ENCODE measurements at regions of chr3 and their contacts with region 1.

Region 1: GRCh38 chr3:139561959-139562676 is 22.6 kb upstream of the RBP1 start:
- DNase-seq: peak; percentile 56
- ATAC-seq: peak; percentile 73
- H3K4me3 ChIP-seq: no peak overlapping the region
- H3K27ac ChIP-seq: no peak overlapping the region
- H3K4me1 ChIP-seq: peaks cover 22% of the 10 kb centered on the region
- H3K27me3 ChIP-seq: no peaks in the 10 kb centered on the region
- CTCF ChIP-seq: peak; percentile 76

Region 2: GRCh38 chr3:139427283-139427993 is 134.7 kb before region 1 on chr3:
- CTCF ChIA-PET with region 1: no interaction called
- POLR2A ChIA-PET with region 1: no interaction called
- intact Hi-C with region 1: loop called (anchors 1 kb)
- DNase-seq: peak; percentile 80
- ATAC-seq: peak; percentile 62
- H3K4me3 ChIP-seq: no peak overlapping the region
- H3K27ac ChIP-seq: no peak overlapping the region
- H3K4me1 ChIP-seq: no peaks in the 10 kb centered on the region
- H3K27me3 ChIP-seq: no peaks in the 10 kb centered on the region
- CTCF ChIP-seq: peak; percentile 82

Region 3: GRCh38 chr3:139519998-139520737 is 42.0 kb before region 1 on chr3:
- CTCF ChIA-PET with region 1: no interaction called
- POLR2A ChIA-PET with region 1: no interaction called
- intact Hi-C with region 1: loop called (anchors 1 kb)
- DNase-seq: peak; percentile 49
- ATAC-seq: peak; percentile 35
- H3K4me3 ChIP-seq: no peak overlapping the region
- H3K27ac ChIP-seq: no peak overlapping the region
- H3K4me1 ChIP-seq: no peaks in the 10 kb centered on the region
- H3K27me3 ChIP-seq: no peaks in the 10 kb centered on the region
- CTCF ChIP-seq: peak; percentile 56

Region 4: DNA sequence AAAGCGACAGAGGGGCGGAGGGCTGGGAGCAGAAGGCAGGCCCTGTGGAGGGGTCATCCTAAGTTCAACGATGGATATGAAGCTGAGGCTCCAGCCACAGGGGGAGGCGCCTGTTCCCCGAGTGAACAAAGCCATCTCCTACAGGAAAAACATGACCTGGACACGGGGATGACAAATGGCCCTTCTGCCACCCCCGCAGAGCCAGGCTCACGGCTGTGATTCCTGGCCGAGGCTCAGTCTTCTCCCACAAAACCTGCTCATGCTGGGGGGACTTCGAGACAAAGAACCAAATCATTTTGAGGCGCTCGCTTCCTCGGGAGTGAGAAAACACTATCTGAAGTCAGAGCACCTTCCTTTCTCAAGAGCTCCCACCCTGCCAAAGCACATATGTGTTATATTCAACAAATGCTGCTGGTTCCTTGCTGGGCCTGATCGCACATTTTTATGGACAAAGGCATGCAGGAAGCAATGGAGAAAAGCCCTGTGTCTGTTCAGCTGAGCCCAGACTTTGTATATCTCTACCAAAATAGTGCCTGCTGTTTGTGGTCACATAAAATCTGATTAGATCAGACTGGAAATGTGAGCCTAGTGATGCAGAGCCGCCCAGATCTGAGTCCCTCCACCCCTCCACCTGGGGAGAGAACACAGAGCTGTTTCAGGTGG is 28.2 kb before region 1 on chr3:
- CTCF ChIA-PET with region 1: no interaction called
- POLR2A ChIA-PET with region 1: no interaction called
- intact Hi-C with region 1: loop called (anchors 2 kb)
- DNase-seq: peak; percentile 74
- ATAC-seq: peak; percentile 66
- H3K4me3 ChIP-seq: no peak overlapping the region; the same call in 1 of the 2 replicates
- H3K27ac ChIP-seq: peak overlapping the region; percentile 81
- H3K4me1 ChIP-seq: peaks cover 28% of the 10 kb centered on the region
- H3K27me3 ChIP-seq: no peaks in the 10 kb centered on the region
- CTCF ChIP-seq: no peak

Region 5: GRCh38 chr3:139546753-139547152 is 15.4 kb before region 1 on chr3:
- CTCF ChIA-PET with region 1: no interaction called
- POLR2A ChIA-PET with region 1: no interaction called
- intact Hi-C with region 1: no loop called
- DNase-seq: no peak
- ATAC-seq: no peak
- H3K4me3 ChIP-seq: no peak overlapping the region
- H3K27ac ChIP-seq: no peak overlapping the region
- H3K4me1 ChIP-seq: no peaks in the 10 kb centered on the region
- H3K27me3 ChIP-seq: no peaks in the 10 kb centered on the region
- CTCF ChIP-seq: no peak

Region 6: GRCh38 chr3:140863580-140864009 is 1301.5 kb after region 1 on chr3:
- CTCF ChIA-PET with region 1: no interaction called
- POLR2A ChIA-PET with region 1: no interaction called
- intact Hi-C with region 1: loop called (anchors 10 kb)
- DNase-seq: peak; percentile 68
- ATAC-seq: peak; percentile 31; the same call in 1 of the 2 replicates
- H3K4me3 ChIP-seq: no peak overlapping the region
- H3K27ac ChIP-seq: no peak overlapping the region
- H3K4me1 ChIP-seq: no peaks in the 10 kb centered on the region
- H3K27me3 ChIP-seq: no peaks in the 10 kb centered on the region
- CTCF ChIP-seq: peak; percentile 57